ENCODE measurements at regions of chr21 and their contacts with region 1.

Region 1: DNA sequence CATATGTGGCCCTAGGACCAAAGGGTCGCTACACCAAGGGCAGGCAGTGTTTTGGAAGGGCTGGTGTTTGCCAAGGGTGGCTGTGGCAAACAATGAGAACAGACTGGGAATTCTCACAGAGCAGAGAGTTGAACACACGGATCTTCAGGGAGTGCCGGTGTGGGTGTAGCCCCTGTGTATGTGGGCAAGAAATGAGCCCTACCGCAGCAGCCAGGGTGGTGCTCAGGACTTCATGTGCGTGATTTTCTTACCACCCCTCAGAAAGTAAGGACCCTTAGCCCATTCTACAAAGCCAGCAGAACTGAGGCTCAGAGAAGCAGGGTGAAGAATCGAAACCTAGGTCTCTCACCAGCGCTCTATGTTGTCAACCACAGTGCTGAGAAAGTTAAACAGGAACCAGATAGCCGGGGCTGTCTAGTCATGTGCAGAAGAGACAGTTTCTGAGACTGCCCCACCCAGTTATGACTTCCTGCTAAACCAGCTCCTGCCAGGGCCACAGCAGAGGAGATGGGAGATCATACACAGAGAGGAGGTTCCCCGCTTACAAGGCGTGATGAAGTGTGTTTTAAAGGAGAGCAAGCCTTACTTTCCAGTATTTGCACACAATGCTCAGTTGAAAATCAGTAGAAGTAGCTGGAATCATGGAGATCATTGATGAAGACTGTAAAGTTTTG is 21.9 kb upstream of the MORC3 start:
- DNase-seq: peak; percentile 60 to 92 (median 76)
- ATAC-seq: peak; percentile 94
- H3K4me3 ChIP-seq: peak overlapping the region; percentile 54
- H3K4me3 Mint-ChIP-seq: peak overlapping the region; percentile 67
- H3K27ac ChIP-seq: peak overlapping the region; percentile 87 to 96
- H3K27ac Mint-ChIP-seq: peak overlapping the region; percentile 96
- H3K4me1 ChIP-seq: peaks cover 40% of the 10 kb centered on the region
- H3K4me1 Mint-ChIP-seq: peaks cover 39% of the 10 kb centered on the region
- H3K27me3 ChIP-seq: no peaks in the 10 kb centered on the region
- H3K27me3 Mint-ChIP-seq: no peaks in the 10 kb centered on the region
- CTCF ChIP-seq: no peak

Region 2: DNA sequence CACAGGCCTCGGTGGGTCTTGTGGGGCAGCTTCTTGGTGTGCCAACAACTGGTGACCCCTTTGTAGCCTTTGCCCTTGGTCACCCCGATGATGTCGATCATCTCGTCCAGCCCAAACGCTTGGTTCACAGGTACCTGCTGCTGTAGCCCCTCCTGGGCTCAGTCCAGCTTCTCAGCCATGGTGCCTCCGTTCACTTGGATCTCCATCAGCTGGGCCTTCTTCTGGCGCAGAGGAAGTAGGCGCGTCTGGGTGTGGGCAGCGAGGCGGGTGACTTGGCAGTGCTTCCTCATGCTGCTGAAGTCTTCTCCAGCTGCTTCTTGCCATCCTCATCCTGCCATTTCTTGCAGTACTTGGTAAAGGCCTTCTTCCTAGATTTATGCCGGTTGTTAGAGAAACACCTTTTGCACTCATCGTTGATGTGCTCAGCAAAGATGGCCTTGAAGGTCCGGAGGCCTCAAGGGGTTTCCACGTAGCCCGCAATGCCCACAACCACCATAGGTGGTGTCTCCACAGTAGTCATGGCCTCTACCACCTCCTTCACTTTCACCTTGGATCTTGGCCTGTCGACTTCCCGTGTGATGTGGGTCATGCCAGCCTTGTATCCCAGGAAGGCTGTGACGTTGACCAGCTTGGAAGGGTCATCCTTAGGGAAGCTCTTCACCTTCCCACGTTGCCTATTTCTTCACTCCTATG is 128.5 kb before region 1 on chr21:
- CTCF ChIA-PET with region 1: no interaction called
- POLR2A ChIA-PET with region 1: interaction called, 10 read pairs
- intact Hi-C with region 1: no loop called
- DNase-seq: no peak
- ATAC-seq: no peak
- H3K4me3 ChIP-seq: no peak overlapping the region
- H3K4me3 Mint-ChIP-seq: no peak overlapping the region
- H3K27ac ChIP-seq: no peak overlapping the region
- H3K27ac Mint-ChIP-seq: no peak overlapping the region
- H3K4me1 ChIP-seq: peaks cover 17% of the 10 kb centered on the region
- H3K4me1 Mint-ChIP-seq: peaks cover 16% of the 10 kb centered on the region
- H3K27me3 ChIP-seq: no peaks in the 10 kb centered on the region
- H3K27me3 Mint-ChIP-seq: no peaks in the 10 kb centered on the region
- CTCF ChIP-seq: no peak

Region 3: DNA sequence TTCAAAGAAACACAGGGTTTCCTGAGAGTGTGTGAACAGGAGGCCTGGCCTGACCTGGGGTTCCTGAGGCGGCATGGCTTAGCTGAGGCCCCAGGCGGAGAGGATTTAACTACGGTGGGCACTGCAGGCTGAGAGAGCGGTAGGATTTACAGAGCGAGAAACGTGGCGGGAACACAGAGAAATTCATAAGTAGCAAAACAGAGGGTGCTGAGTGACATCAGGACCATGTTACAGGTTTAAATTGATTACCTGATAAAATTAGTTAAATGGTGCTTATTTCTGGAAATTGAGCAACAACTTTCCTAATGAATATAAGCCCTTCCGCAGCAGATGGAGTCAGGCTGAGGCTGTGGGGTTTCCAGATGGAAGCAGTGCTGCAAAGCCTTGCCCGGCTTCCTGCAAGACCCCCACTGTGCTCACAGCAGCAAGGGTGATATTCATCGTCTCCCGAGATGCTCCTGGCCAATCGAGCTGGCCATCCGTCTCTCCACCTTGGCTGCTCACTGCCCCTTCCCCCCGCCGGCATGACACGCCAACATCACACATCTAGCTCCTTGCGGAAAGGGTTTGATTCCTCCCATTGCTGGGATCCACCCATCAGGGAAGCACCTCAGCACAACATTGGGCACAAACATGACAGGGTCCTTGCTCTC is 47.5 kb before region 1 on chr21:
- CTCF ChIA-PET with region 1: no interaction called
- POLR2A ChIA-PET with region 1: interaction called, 10 read pairs
- intact Hi-C with region 1: no loop called
- DNase-seq: no peak
- ATAC-seq: peak; percentile 26
- H3K4me3 ChIP-seq: no peak overlapping the region
- H3K4me3 Mint-ChIP-seq: no peak overlapping the region
- H3K27ac ChIP-seq: no peak overlapping the region
- H3K27ac Mint-ChIP-seq: peak overlapping the region; percentile 84
- H3K4me1 ChIP-seq: peaks cover 7% of the 10 kb centered on the region
- H3K4me1 Mint-ChIP-seq: peaks cover 19% of the 10 kb centered on the region
- H3K27me3 ChIP-seq: no peaks in the 10 kb centered on the region
- H3K27me3 Mint-ChIP-seq: no peaks in the 10 kb centered on the region
- CTCF ChIP-seq: no peak

Region 4: DNA sequence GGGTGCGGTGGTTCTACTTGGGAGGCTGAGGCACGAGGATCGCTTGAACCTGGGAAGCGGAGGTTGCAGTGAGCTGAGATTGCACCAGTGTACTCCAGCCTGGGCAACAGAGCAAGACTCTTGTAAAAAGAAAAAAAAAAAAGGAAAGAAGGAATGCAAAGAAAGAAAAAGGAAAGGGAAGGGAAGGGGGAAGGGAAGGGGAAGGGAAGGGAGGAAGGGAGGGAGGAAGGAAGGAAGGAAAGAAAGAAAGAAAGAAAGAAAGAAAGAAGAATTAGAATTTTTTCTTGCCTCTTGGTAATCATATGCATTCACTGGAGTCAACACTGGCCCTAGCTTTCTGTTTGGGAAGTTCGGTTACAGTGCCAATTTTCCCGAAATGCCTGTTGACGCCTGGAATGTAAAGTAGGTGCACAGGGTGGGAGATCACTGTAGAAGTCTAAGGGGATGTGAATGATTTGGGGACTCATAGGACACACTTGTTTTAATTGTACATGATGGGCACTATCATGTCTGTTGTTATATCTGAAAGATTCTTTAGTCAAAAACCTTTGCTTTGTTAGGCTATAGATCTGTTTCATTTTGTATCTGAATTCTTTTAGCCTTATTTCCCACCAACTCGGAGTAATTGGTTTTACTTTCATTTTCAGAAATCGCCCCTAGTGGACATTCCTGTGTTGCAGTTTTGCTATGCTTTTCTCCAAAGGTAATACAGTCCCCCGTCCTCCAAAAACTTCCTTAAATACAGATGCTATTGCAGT is 37.8 kb before region 1 on chr21:
- CTCF ChIA-PET with region 1: no interaction called
- POLR2A ChIA-PET with region 1: interaction called, 9 read pairs
- intact Hi-C with region 1: loop called in 1 of 2 experiments (anchors 2 kb)
- DNase-seq: peak in 12 of 14 experiments; percentile 13 to 81 (median 40)
- ATAC-seq: peak; percentile 93
- H3K4me3 ChIP-seq: peak overlapping the region; percentile 50
- H3K4me3 Mint-ChIP-seq: peak overlapping the region; percentile 89
- H3K27ac ChIP-seq: peak overlapping the region in 1 of 2 donors; percentile 27
- H3K27ac Mint-ChIP-seq: peak overlapping the region; percentile 93
- H3K4me1 ChIP-seq: peaks cover 9% of the 10 kb centered on the region
- H3K4me1 Mint-ChIP-seq: peaks cover 9% of the 10 kb centered on the region
- H3K27me3 ChIP-seq: no peaks in the 10 kb centered on the region
- H3K27me3 Mint-ChIP-seq: no peaks in the 10 kb centered on the region
- CTCF ChIP-seq: peak; percentile 75

Region 5: GRCh38 chr21:36310016-36310415 is 12.0 kb after region 1 on chr21:
- CTCF ChIA-PET with region 1: no interaction called
- POLR2A ChIA-PET with region 1: interaction called, 13 read pairs
- intact Hi-C with region 1: no loop called
- DNase-seq: peak in 4 of 14 experiments; percentile 33 to 71 (median 53)
- ATAC-seq: peak; percentile 82
- H3K4me3 ChIP-seq: no peak overlapping the region
- H3K4me3 Mint-ChIP-seq: no peak overlapping the region
- H3K27ac ChIP-seq: no peak overlapping the region
- H3K27ac Mint-ChIP-seq: peak overlapping the region; percentile 76
- H3K4me1 ChIP-seq: peaks cover 8% of the 10 kb centered on the region
- H3K4me1 Mint-ChIP-seq: peaks cover 8% of the 10 kb centered on the region
- H3K27me3 ChIP-seq: no peaks in the 10 kb centered on the region
- H3K27me3 Mint-ChIP-seq: no peaks in the 10 kb centered on the region
- CTCF ChIP-seq: no peak

Region 6: DNA sequence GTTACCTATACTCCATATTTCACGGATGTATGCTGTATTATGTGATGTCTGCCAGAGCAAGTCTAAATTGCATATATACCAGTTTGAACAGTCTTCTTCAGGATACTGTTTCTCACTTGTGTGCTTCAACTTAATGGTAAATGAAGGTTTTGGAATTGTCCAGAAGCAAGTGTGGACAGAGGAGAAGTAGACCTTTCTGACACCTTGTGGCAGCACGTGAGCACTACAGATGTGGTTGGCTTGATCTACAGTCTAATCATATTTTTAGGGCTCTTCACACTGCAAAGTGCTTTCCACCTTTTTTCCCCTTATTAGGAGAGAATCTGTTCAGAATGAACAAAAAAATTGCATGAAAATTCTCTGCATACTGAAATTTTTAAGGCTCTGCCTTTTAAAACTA is 32.8 kb after region 1 on chr21:
- CTCF ChIA-PET with region 1: interaction called, 3 read pairs
- POLR2A ChIA-PET with region 1: interaction called, 14 read pairs
- intact Hi-C with region 1: no loop called
- DNase-seq: peak in 13 of 14 experiments; percentile 16 to 77 (median 41)
- ATAC-seq: peak; percentile 91
- H3K4me3 ChIP-seq: no peak overlapping the region
- H3K4me3 Mint-ChIP-seq: peak overlapping the region; percentile 8
- H3K27ac ChIP-seq: no peak overlapping the region
- H3K27ac Mint-ChIP-seq: peak overlapping the region; percentile 87
- H3K4me1 ChIP-seq: peaks cover 32% of the 10 kb centered on the region
- H3K4me1 Mint-ChIP-seq: peaks cover 44% of the 10 kb centered on the region
- H3K27me3 ChIP-seq: no peaks in the 10 kb centered on the region
- H3K27me3 Mint-ChIP-seq: no peaks in the 10 kb centered on the region
- CTCF ChIP-seq: peak; percentile 80

Measured in CD4-positive, alpha-beta T cell (primary cell).